ENCODE measurements at regions of chr17 and their contacts with region 1.

Region 1: GRCh38 chr17:17859909-17860765 is 23.4 kb upstream of the SREBF1 start:
- DNase-seq: peak; percentile 72 to 97
- ATAC-seq: peak; percentile 94 to 97
- H3K4me3 ChIP-seq: no peak overlapping the region
- H3K27ac ChIP-seq: peak overlapping the region; percentile 15 to 61; a peak in 4 of 6 replicates
- H3K4me1 ChIP-seq: peaks cover 8% of the 10 kb centered on the region; the same call in 2 of the 3 replicates
- CTCF ChIP-seq: peak; percentile 99
- EP300 ChIP-seq: no peak
- POLR2A ChIP-seq: no peak
- RAD21 ChIP-seq: peak; percentile 98 to 99

Region 2: GRCh38 chr17:17800504-17801021 is 59.6 kb before region 1 on chr17:
- CTCF ChIA-PET with region 1: interaction called, 859 read pairs
- POLR2A ChIA-PET with region 1: no interaction called
- DNase-seq: no peak
- ATAC-seq: peak in 1 of 2 experiments; percentile 7; a peak in 2 of 6 replicates
- H3K4me3 ChIP-seq: no peak overlapping the region
- H3K27ac ChIP-seq: no peak overlapping the region
- H3K4me1 ChIP-seq: no peaks in the 10 kb centered on the region
- CTCF ChIP-seq: no peak
- EP300 ChIP-seq: no peak
- POLR2A ChIP-seq: no peak
- RAD21 ChIP-seq: peak in 1 of 2 experiments; percentile 17; a peak in 1 of 5 replicates

Region 3: DNA sequence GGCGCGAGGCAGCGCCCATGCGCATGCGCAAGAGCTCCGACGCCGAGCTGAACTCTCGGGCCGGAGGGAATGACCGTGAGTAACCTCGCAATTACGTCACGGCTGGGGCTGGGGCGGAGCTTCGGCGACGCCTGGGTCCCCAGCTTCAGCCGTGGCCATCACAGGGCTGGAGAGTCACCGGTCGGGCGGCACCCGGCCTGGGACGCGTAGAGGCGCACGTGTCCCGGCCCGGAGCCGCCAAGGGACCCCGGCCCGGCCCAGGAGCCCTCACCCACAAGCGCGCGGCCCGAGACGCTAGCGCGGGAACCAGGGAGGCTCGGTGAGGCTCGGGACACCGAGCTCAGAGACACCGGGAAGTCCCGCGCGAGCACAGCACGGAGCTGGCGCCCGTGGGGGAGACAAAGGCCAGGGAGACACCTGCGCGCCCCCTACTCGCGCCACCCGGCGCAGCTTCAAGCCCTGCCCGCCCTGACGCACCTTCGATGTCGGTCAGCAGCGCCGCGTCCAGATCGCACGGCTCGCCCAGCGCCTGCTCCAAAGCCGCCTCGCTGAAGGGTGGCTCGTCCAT is 23.8 kb before region 1 on chr17:
- CTCF ChIA-PET with region 1: interaction called, 859 read pairs
- POLR2A ChIA-PET with region 1: interaction called, 15 read pairs
- DNase-seq: peak; percentile 96 to 98
- ATAC-seq: peak; percentile 45 to 62
- H3K4me3 ChIP-seq: peak overlapping the region; percentile 85
- H3K27ac ChIP-seq: peak overlapping the region; percentile 98
- H3K4me1 ChIP-seq: peaks cover 82% of the 10 kb centered on the region
- CTCF ChIP-seq: 0 out of 3 replicates have a peak, but pooled peaks have one; percentile 13
- EP300 ChIP-seq: no peak; a peak in 2 of 5 replicates
- POLR2A ChIP-seq: peak; percentile 89
- RAD21 ChIP-seq: no peak

Region 4: GRCh38 chr17:17849845-17850373 is 10.2 kb before region 1 on chr17:
- CTCF ChIA-PET with region 1: interaction called, 78 read pairs
- POLR2A ChIA-PET with region 1: no interaction called
- DNase-seq: peak in 1 of 2 experiments; percentile 44
- ATAC-seq: peak; percentile 55 to 67; a peak in 4 of 6 replicates
- H3K4me3 ChIP-seq: no peak overlapping the region
- H3K27ac ChIP-seq: peak overlapping the region; percentile 32 to 74; a peak in 4 of 6 replicates
- H3K4me1 ChIP-seq: peaks cover 19% of the 10 kb centered on the region
- CTCF ChIP-seq: no peak
- EP300 ChIP-seq: no peak
- POLR2A ChIP-seq: no peak
- RAD21 ChIP-seq: no peak

Region 5: GRCh38 chr17:17877529-17878358 is 17.6 kb after region 1 on chr17:
- CTCF ChIA-PET with region 1: interaction called, 35 read pairs
- POLR2A ChIA-PET with region 1: no interaction called
- DNase-seq: no peak
- ATAC-seq: no peak
- H3K4me3 ChIP-seq: no peak overlapping the region
- H3K27ac ChIP-seq: no peak overlapping the region
- H3K4me1 ChIP-seq: peaks cover 5% of the 10 kb centered on the region; the same call in 1 of the 3 replicates
- CTCF ChIP-seq: no peak
- EP300 ChIP-seq: no peak
- POLR2A ChIP-seq: no peak
- RAD21 ChIP-seq: no peak

Region 6: DNA sequence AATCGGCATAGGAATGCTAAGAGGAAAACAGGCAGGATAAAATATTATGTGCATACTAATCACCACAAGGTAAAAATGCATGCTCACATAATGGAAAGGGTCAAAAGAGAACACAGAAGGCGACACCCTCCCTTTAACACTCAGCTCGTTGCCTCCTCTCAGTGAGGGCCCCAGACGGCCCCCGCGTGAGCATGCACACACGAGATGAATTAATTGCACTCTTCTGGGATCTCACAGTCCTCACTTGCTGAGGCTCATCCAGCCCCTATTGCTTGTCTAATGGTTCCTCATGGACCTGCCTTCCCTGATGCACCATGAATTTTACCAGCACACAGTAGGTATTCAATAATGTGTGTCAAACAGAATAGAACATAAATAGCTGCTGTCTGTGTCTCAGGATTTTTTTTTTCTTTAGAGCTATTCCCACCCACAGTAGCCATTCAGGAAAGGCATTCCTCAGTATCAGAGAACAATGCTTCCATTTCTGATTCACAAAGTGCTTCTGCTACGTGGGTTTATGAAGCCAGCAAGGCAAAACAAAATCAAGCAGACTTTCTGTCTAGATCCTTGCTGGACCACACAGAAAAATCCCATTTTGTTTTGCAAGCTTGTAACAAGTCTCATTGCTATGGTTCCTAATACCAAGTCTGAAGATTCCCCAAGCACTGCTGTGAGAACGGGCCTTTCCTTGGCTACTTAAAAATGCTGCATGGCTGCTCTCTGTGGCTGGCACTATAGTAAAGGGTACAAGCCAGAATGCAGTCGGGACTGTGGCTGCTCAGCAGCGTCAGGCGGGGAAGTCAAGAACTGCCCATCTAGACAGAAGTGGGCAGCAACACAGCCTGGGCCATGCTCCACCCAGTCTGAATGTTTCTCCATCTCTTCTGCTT is 68.5 kb after region 1 on chr17:
- CTCF ChIA-PET with region 1: interaction called, 10 read pairs
- POLR2A ChIA-PET with region 1: no interaction called
- DNase-seq: no peak
- ATAC-seq: peak in 1 of 2 experiments; percentile 31; a peak in 1 of 6 replicates
- H3K4me3 ChIP-seq: no peak overlapping the region
- H3K27ac ChIP-seq: no peak overlapping the region
- H3K4me1 ChIP-seq: peaks cover 11% of the 10 kb centered on the region; the same call in 2 of the 3 replicates
- CTCF ChIP-seq: no peak
- EP300 ChIP-seq: no peak
- POLR2A ChIP-seq: no peak
- RAD21 ChIP-seq: no peak

Region 7: DNA sequence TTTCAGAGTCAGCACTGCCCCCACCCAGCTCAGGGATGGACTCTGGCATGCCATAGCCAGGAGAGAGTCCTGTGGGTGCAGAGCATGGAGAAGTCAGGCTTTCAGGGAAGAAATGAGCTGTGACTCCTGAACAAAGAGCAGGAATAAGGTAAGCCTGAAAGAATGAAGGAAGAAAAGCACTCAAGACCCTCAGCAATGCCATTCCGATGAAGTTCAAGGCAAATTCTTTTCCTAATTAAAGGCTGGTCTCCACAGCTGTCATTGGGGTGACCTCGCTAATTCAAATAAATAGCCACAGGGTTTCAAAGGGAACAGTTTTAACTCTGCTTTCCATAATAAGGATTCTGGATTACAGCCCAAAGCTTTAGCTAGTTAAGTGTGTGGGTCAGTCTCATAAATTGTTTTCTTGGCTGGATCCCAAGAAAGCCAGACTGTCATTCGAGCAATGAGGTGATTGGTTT is 80.3 kb after region 1 on chr17:
- CTCF ChIA-PET with region 1: no interaction called
- POLR2A ChIA-PET with region 1: no interaction called
- DNase-seq: no peak
- ATAC-seq: 0 out of 6 replicates have a peak, but pooled peaks of 1 of the 2 experiments have one; percentile 19
- H3K4me3 ChIP-seq: no peak overlapping the region
- H3K27ac ChIP-seq: peak overlapping the region in 1 of 2 experiments; percentile 10; a peak in 1 of 6 replicates
- H3K4me1 ChIP-seq: peaks cover 64% of the 10 kb centered on the region
- CTCF ChIP-seq: no peak
- EP300 ChIP-seq: no peak
- POLR2A ChIP-seq: no peak
- RAD21 ChIP-seq: no peak

Region 8: GRCh38 chr17:18043491-18043890 is 183.4 kb after region 1 on chr17:
- CTCF ChIA-PET with region 1: no interaction called
- POLR2A ChIA-PET with region 1: no interaction called
- DNase-seq: peak in 1 of 2 experiments; percentile 30
- ATAC-seq: no peak
- H3K4me3 ChIP-seq: no peak overlapping the region
- H3K27ac ChIP-seq: no peak overlapping the region
- H3K4me1 ChIP-seq: peaks cover 21% of the 10 kb centered on the region
- CTCF ChIP-seq: peak; percentile 31; the same call in 2 of the 3 replicates
- EP300 ChIP-seq: no peak
- POLR2A ChIP-seq: no peak
- RAD21 ChIP-seq: peak; percentile 15 to 45; a peak in 2 of 5 replicates